A673 (cell line): ENCODE measurements at regions of chr12 and their contacts with region 1.

Region 1: DNA sequence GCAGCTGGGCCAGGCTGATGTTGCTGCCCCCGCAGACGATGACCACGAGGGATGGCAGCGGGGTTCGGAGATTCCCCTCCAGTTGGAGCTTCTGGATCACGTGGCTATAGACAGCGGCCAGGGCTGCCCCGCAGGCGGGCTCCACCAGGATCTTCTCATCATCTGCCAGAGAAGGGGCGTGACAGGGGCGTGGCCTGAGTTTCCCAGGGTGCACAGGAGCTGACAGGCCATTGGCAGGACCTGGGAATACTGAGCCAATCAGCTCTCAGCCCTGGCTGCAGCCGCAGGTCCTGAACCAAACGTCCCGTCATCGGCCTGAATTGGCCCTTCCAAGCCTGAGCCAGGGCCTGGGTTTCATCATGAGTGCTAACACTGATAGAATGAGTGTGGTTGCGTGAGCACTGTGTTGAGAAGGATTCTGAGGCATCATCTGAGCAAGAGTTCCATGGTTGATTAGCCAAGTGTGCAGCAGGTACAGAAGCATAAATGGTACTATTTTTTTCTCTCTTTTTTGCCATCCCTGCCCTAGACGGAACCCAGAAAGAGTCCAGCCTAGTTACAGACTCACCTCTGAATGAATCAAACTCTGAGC is 10.6 kb downstream of the SDS start:
- DNase-seq: no peak
- H3K4me3 ChIP-seq: no peak overlapping the region
- H3K27ac ChIP-seq: no peak overlapping the region
- H3K4me1 ChIP-seq: no peaks in the 10 kb centered on the region
- H3K27me3 ChIP-seq: no peaks in the 10 kb centered on the region
- CTCF ChIP-seq: no peak

Region 2: GRCh38 chr12:113062502-113063395 is 330.3 kb before region 1 on chr12:
- CTCF ChIA-PET with region 1: no interaction called
- POLR2A ChIA-PET with region 1: interaction called, 11 read pairs
- intact Hi-C with region 1: no loop called
- DNase-seq: no peak
- H3K4me3 ChIP-seq: no peak overlapping the region
- H3K27ac ChIP-seq: no peak overlapping the region
- H3K4me1 ChIP-seq: no peaks in the 10 kb centered on the region
- H3K27me3 ChIP-seq: no peaks in the 10 kb centered on the region
- CTCF ChIP-seq: no peak

Region 3: DNA sequence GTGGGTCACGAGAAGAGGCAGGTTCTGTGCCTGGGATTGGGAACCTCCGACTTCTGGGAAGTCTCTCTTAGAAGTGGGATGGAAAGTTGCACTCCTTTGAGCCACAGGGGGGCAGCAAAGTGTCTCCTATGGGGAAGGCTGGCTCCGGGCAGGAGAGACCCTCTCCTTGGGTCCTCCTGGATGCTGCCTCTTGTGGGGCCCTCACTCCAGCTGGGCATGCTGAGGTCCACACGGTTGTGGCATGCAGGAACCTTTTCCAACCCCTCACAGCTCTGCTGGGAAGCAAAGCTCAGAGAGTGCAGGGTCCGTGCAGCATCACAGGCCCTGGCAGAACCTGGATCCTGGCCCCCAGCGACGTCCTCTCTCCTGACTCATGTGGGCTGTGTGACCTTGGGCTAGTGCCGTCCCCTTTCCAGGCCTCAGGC is 46.5 kb after region 1 on chr12:
- CTCF ChIA-PET with region 1: no interaction called
- POLR2A ChIA-PET with region 1: no interaction called
- intact Hi-C with region 1: no loop called
- DNase-seq: peak; percentile 65
- H3K4me3 ChIP-seq: no peak overlapping the region
- H3K27ac ChIP-seq: no peak overlapping the region
- H3K4me1 ChIP-seq: no peaks in the 10 kb centered on the region
- H3K27me3 ChIP-seq: peaks cover 4% of the 10 kb centered on the region
- CTCF ChIP-seq: peak; percentile 78